ENCODE measurements at regions of chr11 and their contacts with region 1.

Region 1: GRCh38 chr11:1842491-1843473 is 4.0 kb downstream of the TNNI2 start:
- DNase-seq: peak; percentile 55 to 73
- ATAC-seq: peak in 7 of 8 donors; percentile 41 to 89 (median 78)
- H3K4me3 ChIP-seq: no peak overlapping the region
- H3K27ac ChIP-seq: peak overlapping the region in 9 of 10 donors; percentile 1 to 80 (median 58)
- H3K4me1 ChIP-seq: peaks cover 7 to 68% (median 39%) of the 10 kb centered on the region in 9 donors
- H3K27me3 ChIP-seq: no peaks in the 10 kb centered on the region
- CTCF ChIP-seq: no peak

Region 2: GRCh38 chr11:1502954-1503707 is 339.7 kb before region 1 on chr11:
- intact Hi-C with region 1: no loop called
- DNase-seq: peak; percentile 52 to 59
- ATAC-seq: peak; percentile 44 to 86 (median 76)
- H3K4me3 ChIP-seq: no peak overlapping the region
- H3K27ac ChIP-seq: peak overlapping the region in 9 of 10 donors; percentile 18 to 78 (median 52)
- H3K4me1 ChIP-seq: peaks cover 36 to 90% (median 73%) of the 10 kb centered on the region in 9 donors
- H3K27me3 ChIP-seq: no peaks in the 10 kb centered on the region
- CTCF ChIP-seq: no peak

Region 3: GRCh38 chr11:1782831-1783724 is 59.7 kb before region 1 on chr11:
- intact Hi-C with region 1: no loop called
- DNase-seq: no peak
- ATAC-seq: no peak
- H3K4me3 ChIP-seq: no peak overlapping the region
- H3K27ac ChIP-seq: peak overlapping the region in 1 of 10 donors; percentile 81
- H3K4me1 ChIP-seq: peaks cover 0 to 58% (median 0%) of the 10 kb centered on the region in 9 donors
- H3K27me3 ChIP-seq: peaks cover 0 to 25% (median 5%) of the 10 kb centered on the region in 7 donors
- CTCF ChIP-seq: no peak

Region 4: GRCh38 chr11:1863352-1864216 is 20.8 kb after region 1 on chr11:
- intact Hi-C with region 1: loop called in 1 of 10 experiments (anchors 2 kb)
- DNase-seq: peak; percentile 88 to 89
- ATAC-seq: peak; percentile 86 to 94 (median 92)
- H3K4me3 ChIP-seq: peak overlapping the region in 9 of 10 donors; percentile 17 to 56 (median 48)
- H3K27ac ChIP-seq: peak overlapping the region; percentile 55 to 90 (median 84)
- H3K4me1 ChIP-seq: peaks cover 15 to 57% (median 27%) of the 10 kb centered on the region in 9 donors
- H3K27me3 ChIP-seq: peaks cover 0 to 3% (median 0%) of the 10 kb centered on the region in 7 donors
- CTCF ChIP-seq: no peak